ENCODE measurements at regions of chrX and their contacts with region 1.

Region 1: DNA sequence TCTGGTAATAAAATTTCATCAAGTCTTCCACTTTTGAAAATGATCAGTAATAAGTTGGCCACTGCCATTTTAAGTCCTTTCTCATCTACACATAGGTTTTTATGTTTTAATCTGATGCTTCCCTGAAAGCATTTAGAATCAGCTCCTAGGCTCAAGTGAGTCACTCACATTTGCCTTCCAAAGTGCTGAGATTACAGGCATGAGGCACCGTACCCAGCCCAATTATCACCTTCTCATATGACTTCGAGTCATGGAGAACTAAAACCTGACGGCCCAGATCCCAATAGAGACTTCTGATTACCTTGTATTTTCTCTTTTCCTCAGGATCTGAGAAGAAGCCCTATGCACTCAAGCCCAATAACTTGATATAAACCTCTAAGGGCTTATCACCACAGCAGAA is 140.8 kb downstream of the OPHN1 start:
- DNase-seq: peak; percentile 22
- ATAC-seq: no peak
- H3K4me3 ChIP-seq: no peak overlapping the region
- H3K27ac ChIP-seq: no peak overlapping the region
- H3K4me1 ChIP-seq: peaks cover 10% of the 10 kb centered on the region
- H3K27me3 ChIP-seq: no peaks in the 10 kb centered on the region
- CTCF ChIP-seq: no peak

Region 2: GRCh38 chrX:68238568-68238967 is 53.9 kb before region 1 on chrX:
- CTCF ChIA-PET with region 1: no interaction called
- POLR2A ChIA-PET with region 1: no interaction called
- intact Hi-C with region 1: loop called (anchors 10 kb)
- DNase-seq: peak; percentile 43
- ATAC-seq: no peak
- H3K4me3 ChIP-seq: no peak overlapping the region
- H3K27ac ChIP-seq: no peak overlapping the region
- H3K4me1 ChIP-seq: no peaks in the 10 kb centered on the region
- H3K27me3 ChIP-seq: no peaks in the 10 kb centered on the region
- CTCF ChIP-seq: peak; percentile 78

Region 3: GRCh38 chrX:68396961-68397419 is 104.5 kb after region 1 on chrX:
- CTCF ChIA-PET with region 1: no interaction called
- POLR2A ChIA-PET with region 1: no interaction called
- intact Hi-C with region 1: no loop called
- DNase-seq: no peak
- ATAC-seq: no peak
- H3K4me3 ChIP-seq: no peak overlapping the region
- H3K27ac ChIP-seq: no peak overlapping the region
- H3K4me1 ChIP-seq: no peaks in the 10 kb centered on the region
- H3K27me3 ChIP-seq: no peaks in the 10 kb centered on the region
- CTCF ChIP-seq: no peak

Measured in PC-3 (cell line).